Activated CD8-positive, alpha-beta T cell treated with anti-CD3 and anti-CD28 coated beads for 36 hours (primary cell): ENCODE measurements at regions of chrX and their contacts with region 1.

Region 1: GRCh38 chrX:23901805-23902204 is 5.9 kb downstream of the APOO start:
- DNase-seq: peak; percentile 63
- ATAC-seq: peak; percentile 81
- H3K4me3 Mint-ChIP-seq: no peak overlapping the region
- H3K27ac Mint-ChIP-seq: no peak overlapping the region
- H3K4me1 Mint-ChIP-seq: peaks cover 9% of the 10 kb centered on the region
- H3K27me3 Mint-ChIP-seq: no peaks in the 10 kb centered on the region
- CTCF ChIP-seq: no peak

Region 2: DNA sequence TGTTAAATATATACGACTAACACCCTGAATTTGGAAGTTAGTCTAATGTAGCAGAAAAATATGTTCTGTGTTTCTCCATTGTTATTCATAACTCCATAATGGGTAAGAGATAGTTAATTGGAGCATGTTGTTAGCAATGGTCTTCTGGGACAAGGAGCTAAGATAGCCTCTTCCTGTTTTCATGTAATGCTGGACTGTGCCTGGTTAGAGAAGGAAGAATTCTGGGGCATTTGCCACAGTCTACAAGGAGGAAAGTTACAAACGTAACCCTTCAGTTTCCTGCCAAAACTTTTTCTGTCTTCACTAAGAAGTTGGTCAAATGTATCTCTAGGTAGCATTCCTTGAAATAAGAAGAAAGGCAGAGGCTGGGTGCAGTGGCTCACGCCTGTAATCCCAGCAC is 228.7 kb before region 1 on chrX:
- CTCF ChIA-PET with region 1: interaction called, 14 read pairs
- POLR2A ChIA-PET with region 1: no interaction called
- intact Hi-C with region 1: no loop called
- DNase-seq: no peak
- ATAC-seq: no peak
- H3K4me3 Mint-ChIP-seq: no peak overlapping the region
- H3K27ac Mint-ChIP-seq: no peak overlapping the region
- H3K4me1 Mint-ChIP-seq: peaks cover 12% of the 10 kb centered on the region
- H3K27me3 Mint-ChIP-seq: no peaks in the 10 kb centered on the region
- CTCF ChIP-seq: no peak

Region 3: GRCh38 chrX:23699636-23700194 is 202.1 kb before region 1 on chrX:
- CTCF ChIA-PET with region 1: interaction called, 79 read pairs
- POLR2A ChIA-PET with region 1: interaction called, 4 read pairs
- intact Hi-C with region 1: loop called (anchors 2 kb)
- DNase-seq: peak; percentile 58
- ATAC-seq: peak; percentile 85
- H3K4me3 Mint-ChIP-seq: peak overlapping the region; percentile 66
- H3K27ac Mint-ChIP-seq: peak overlapping the region; percentile 46
- H3K4me1 Mint-ChIP-seq: peaks cover 4% of the 10 kb centered on the region
- H3K27me3 Mint-ChIP-seq: no peaks in the 10 kb centered on the region
- CTCF ChIP-seq: no peak

Region 4: GRCh38 chrX:23736030-23736429 is 165.8 kb before region 1 on chrX:
- CTCF ChIA-PET with region 1: interaction called, 10 read pairs
- POLR2A ChIA-PET with region 1: no interaction called
- intact Hi-C with region 1: no loop called
- DNase-seq: no peak
- ATAC-seq: no peak
- H3K4me3 Mint-ChIP-seq: no peak overlapping the region
- H3K27ac Mint-ChIP-seq: peak overlapping the region; percentile 38
- H3K4me1 Mint-ChIP-seq: peaks cover 27% of the 10 kb centered on the region
- H3K27me3 Mint-ChIP-seq: no peaks in the 10 kb centered on the region
- CTCF ChIP-seq: no peak

Region 5: GRCh38 chrX:23782863-23783568 is 118.8 kb before region 1 on chrX and contains the start of gene SAT1:
- CTCF ChIA-PET with region 1: interaction called, 40 read pairs
- POLR2A ChIA-PET with region 1: interaction called, 8 read pairs
- intact Hi-C with region 1: loop called (anchors 2 kb)
- DNase-seq: peak; percentile 96
- ATAC-seq: peak; percentile 87
- H3K4me3 Mint-ChIP-seq: peak within 1 kb of the TSS; percentile 88
- H3K27ac Mint-ChIP-seq: peak within 1 kb of the TSS; percentile 97
- H3K4me1 Mint-ChIP-seq: peaks cover 35% of the 10 kb centered on the region
- H3K27me3 Mint-ChIP-seq: no peaks in the 10 kb centered on the region
- CTCF ChIP-seq: peak; percentile 68
- total RNA-seq, gene SAT1: 94.1 to 101 TPM

Region 6: GRCh38 chrX:24054182-24055042 is 152.6 kb after region 1 on chrX and contains the start of gene EIF2S3:
- CTCF ChIA-PET with region 1: interaction called, 42 read pairs
- POLR2A ChIA-PET with region 1: interaction called, 6 read pairs
- intact Hi-C with region 1: loop called (anchors 10 kb)
- DNase-seq: peak; percentile 90
- ATAC-seq: peak; percentile 88
- H3K4me3 Mint-ChIP-seq: no peak within 1 kb of the TSS
- H3K27ac Mint-ChIP-seq: no peak within 1 kb of the TSS
- H3K4me1 Mint-ChIP-seq: peaks cover 3% of the 10 kb centered on the region
- H3K27me3 Mint-ChIP-seq: no peaks in the 10 kb centered on the region
- CTCF ChIP-seq: peak; percentile 58
- total RNA-seq, gene EIF2S3: 350 to 366 TPM